Dorsolateral prefrontal cortex (tissue), 120 donors: ENCODE measurements at regions of chr6 and their contacts with region 1.

Region 1: DNA sequence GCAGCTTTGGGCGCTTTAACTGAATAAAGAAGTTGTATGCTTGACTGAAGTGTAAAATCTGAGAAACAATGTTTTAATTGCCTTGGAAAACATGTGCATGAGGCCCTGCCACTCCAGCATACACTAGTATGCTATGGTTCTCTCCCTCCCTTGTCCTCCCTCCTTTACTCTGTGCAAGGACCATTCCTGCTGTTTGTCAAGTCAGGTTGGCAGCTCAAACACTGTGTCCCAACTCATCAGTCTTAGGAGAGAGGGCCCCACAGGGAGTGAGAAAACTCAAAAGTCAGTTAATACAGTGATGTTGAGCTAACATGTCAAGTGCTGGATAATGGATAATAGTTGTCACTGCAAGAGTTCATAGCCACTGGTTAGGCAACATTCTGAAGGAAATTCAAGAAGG is 543.6 kb downstream of the GRIK2 start:
- DNase-seq: no peak
- H3K4me3 ChIP-seq: no peak overlapping the region
- H3K27ac ChIP-seq: no peak overlapping the region
- H3K27me3 ChIP-seq: no peaks in the 10 kb centered on the region
- CTCF ChIP-seq: no peak

Region 2: GRCh38 chr6:101961357-101961756 is 24.2 kb after region 1 on chr6:
- intact Hi-C with region 1: loop called in 1 of 2 experiments (anchors 1 kb)
- DNase-seq: no peak
- H3K4me3 ChIP-seq: no peak overlapping the region
- H3K27ac ChIP-seq: no peak overlapping the region
- H3K27me3 ChIP-seq: no peaks in the 10 kb centered on the region
- CTCF ChIP-seq: no peak

Region 3: DNA sequence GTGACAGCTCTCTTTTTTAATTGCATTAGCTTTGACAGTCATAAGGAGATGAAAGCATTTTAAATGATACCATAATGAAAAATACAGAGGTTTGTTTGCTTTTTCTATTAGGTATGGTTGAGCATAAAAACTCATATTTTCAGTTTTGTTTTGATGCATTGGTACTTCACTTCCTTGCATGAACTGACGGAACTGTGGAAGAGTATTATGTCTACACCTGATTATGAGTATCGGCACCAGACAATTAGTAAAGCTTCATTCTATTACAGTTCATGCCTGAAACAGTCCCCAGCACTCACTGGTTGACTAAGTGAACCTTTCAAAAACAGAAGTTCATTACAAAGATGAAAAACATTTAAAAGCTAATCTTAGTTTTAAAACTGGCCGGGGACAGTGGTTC is 49.4 kb after region 1 on chr6:
- intact Hi-C with region 1: no loop called
- DNase-seq: no peak
- H3K4me3 ChIP-seq: no peak overlapping the region
- H3K27ac ChIP-seq: no peak overlapping the region
- H3K27me3 ChIP-seq: no peaks in the 10 kb centered on the region
- CTCF ChIP-seq: no peak

Region 4: DNA sequence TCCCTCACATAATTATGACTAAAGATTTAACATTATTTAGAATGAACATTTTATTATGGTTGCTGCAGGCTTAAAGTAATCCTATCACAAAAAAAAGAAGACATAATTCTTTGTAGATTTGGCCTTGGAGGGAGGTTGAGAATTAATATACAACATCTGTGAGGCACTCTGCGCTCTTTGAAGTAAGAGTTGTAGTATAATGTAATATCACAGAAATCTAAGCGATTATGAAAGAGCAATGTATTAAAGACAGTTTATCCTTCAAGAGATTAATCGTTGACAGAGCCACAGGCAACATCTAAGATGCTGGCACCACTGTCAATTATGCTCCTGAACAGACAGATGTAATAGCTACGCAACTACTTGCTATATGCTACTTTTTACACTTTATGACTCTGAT is 403.2 kb after region 1 on chr6:
- intact Hi-C with region 1: no loop called
- DNase-seq: no peak
- H3K4me3 ChIP-seq: no peak overlapping the region
- H3K27ac ChIP-seq: no peak overlapping the region
- H3K27me3 ChIP-seq: peaks cover 0 to 4% (median 0%) of the 10 kb centered on the region in 45 donors
- CTCF ChIP-seq: no peak